ENCODE measurements at regions of chr11 and their contacts with region 1.

Region 1: DNA sequence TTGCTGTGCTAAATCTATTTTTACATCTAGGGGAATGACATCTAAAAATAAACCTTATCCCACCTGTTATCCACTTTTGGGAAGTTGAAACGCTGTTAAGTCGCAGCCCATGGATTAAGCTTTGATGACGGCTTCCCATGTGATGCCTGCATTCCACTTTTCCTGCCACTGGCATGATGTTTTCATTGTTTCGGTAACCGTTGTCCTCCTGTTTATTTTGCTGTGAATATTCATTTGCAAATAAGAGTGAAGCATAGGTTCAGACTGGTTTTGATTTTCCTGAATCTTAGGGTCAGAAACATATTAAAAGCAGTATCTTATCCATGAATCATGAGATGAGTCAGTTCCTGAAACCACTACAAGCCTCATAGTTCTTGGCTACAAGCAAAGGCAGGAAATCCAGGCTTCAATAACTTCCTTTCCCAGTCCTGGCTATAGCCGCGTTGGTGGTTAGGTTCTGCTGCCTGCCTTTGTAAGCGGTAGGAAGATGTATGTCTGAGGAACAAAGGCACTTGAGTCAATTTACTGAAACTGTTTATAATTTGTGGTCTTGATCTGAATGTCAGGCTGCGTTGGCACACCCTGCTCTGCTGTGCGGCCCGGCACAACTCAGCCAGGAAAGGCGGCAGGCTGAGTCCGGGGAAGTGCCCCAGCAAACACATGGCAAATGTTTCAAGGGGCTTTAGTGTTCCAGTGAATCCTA is 19.4 kb downstream of the TEAD1 start:
- DNase-seq: peak; percentile 59
- H3K4me3 Mint-ChIP-seq: peak overlapping the region; percentile 62
- H3K27ac Mint-ChIP-seq: peak overlapping the region; percentile 94
- H3K4me1 Mint-ChIP-seq: peaks cover 83% of the 10 kb centered on the region
- H3K27me3 Mint-ChIP-seq: no peaks in the 10 kb centered on the region
- CTCF ChIP-seq: no peak

Region 2: DNA sequence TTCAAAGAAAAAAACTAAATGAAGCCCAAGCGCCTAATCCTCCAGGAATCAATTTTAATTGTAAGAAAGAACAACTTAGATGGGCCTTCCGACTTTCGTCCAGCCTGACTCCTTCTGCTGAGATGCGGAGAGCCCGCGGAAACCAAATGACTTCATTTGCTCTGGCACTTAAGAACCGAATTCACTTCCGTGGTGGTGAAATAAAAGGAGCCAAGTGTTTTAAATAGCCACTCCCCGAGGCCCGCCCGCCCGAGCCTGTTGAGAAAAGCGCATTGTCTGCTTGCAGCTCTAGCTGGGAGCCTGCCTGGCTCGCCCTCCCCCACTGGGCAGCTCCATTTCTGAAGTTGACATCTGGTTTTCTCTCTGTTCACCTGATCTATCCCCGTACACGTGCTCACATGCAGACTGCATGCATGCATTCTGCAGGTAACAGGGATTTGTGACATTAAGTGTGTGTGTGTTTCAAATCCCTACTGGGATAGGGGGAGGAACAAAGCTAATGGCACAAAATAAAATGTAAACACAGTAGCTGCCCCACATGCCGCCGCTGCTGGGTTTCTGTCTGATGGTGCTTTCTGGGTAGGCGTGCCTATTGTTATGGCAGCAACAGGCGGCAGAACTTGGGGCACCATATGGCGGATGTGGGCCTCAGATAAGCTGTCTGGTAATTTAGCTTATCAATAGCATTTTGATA is 13.2 kb before region 1 on chr11:
- CTCF ChIA-PET with region 1: interaction called, 11 read pairs
- intact Hi-C with region 1: loop called (anchors 2 kb)
- DNase-seq: peak; percentile 90
- H3K4me3 Mint-ChIP-seq: peak overlapping the region; percentile 59
- H3K27ac Mint-ChIP-seq: peak overlapping the region; percentile 79
- H3K4me1 Mint-ChIP-seq: peaks cover 71% of the 10 kb centered on the region
- H3K27me3 Mint-ChIP-seq: no peaks in the 10 kb centered on the region
- CTCF ChIP-seq: no peak

Region 3: GRCh38 chr11:12761029-12761428 is 67.4 kb after region 1 on chr11:
- CTCF ChIA-PET with region 1: no interaction called
- intact Hi-C with region 1: loop called (anchors 1 kb)
- DNase-seq: peak; percentile 15
- H3K4me3 Mint-ChIP-seq: no peak overlapping the region
- H3K27ac Mint-ChIP-seq: no peak overlapping the region
- H3K4me1 Mint-ChIP-seq: peaks cover 43% of the 10 kb centered on the region
- H3K27me3 Mint-ChIP-seq: no peaks in the 10 kb centered on the region
- CTCF ChIP-seq: no peak

Measured in Calu3 (cell line).